ENCODE measurements at regions of chr2 and their contacts with region 1.

Region 1: GRCh38 chr2:96407041-96407918 is 71.7 kb downstream of the NCAPH start:
- DNase-seq: peak; percentile 80
- ATAC-seq: peak; percentile 72

Region 2: GRCh38 chr2:96509114-96509846 is 102.0 kb after region 1 on chr2:
- intact Hi-C with region 1: loop called (anchors 5 kb)
- DNase-seq: peak; percentile 94
- ATAC-seq: peak; percentile 92